ENCODE measurements at regions of chr10 and their contacts with region 1.

Region 1: DNA sequence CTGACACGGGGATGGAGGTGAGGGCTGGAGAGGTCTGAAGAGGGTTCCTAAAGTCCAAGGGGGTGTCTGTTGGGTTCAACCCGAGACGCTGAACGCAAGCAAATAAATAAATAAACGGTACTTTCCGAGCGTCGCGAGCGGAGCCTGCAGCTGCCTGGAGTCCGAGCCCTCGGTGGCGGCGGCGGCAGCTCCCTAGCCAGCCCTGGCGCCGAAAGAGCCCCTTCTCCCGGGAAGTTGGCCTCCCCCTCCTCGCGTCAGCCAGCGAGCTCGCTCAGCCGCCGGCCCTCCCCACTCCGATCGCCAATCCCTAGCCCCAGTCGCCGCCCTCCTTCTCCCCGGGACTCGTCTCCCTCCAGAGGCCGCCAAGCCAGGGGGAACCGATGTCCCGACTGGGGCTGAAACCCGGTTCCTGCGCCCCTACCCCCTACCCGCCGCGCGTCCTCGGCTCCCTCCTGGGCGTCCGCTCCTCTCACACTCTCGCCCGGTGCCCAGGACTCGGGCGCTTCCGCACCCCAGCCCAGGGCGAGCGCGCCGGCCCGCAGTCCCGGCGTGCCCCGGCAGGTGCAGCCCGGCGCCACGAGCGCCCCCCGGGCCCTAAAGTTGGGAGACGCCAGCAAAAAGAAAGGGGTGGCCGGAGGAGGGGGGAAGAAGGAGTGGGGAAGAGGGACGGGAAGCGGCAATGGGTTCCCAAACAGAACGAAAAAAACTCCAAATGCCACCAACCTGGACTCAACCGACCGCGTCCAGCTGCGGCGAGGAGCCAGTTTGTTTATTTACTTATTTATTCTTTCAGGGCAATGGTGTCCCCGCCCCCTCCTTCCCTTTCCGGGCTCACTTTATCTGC is at the start of gene GFRA1:
- DNase-seq: no peak
- H3K4me3 ChIP-seq: peak within 1 kb of the TSS; percentile 39 to 52 (median 44)
- H3K27ac ChIP-seq: peak within 1 kb of the TSS; percentile 55 to 81 (median 57)
- H3K4me1 ChIP-seq: peaks cover 0 to 23% (median 11%) of the 10 kb centered on the region in 4 donors
- H3K27me3 ChIP-seq: peaks cover 85% of the 10 kb centered on the region
- CTCF ChIP-seq: peak in 1 of 5 experiments; percentile 5
- EP300 ChIP-seq: no peak
- POLR2A ChIP-seq: no peak
- total RNA-seq, gene GFRA1: 12.0 to 32.8 (median 17.3) TPM

Region 2: DNA sequence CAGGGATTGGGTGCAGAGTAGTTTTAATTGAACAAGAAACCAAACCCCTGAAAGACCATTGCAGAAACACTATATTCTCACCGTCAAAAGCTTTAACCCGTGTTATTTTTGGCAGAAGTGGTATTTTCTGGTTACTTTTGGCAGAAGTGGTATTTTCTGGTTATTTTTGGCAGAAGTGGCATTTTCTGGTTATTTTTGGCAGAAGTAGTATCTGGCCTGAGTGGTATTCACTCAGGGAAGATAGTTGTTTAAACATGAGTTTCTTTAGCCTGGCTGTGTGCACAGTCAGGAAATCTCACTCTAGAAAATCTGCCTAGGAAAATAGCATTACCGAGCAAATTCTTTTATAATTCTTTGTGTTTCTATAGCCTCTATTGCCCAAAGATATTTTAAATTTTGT is 322.3 kb before region 1 on chr10:
- in situ Hi-C with region 1: no loop called
- intact Hi-C with region 1: loop called (anchors 10 kb)
- DNase-seq: no peak
- H3K4me3 ChIP-seq: no peak overlapping the region
- H3K27ac ChIP-seq: no peak overlapping the region
- H3K4me1 ChIP-seq: no peaks in the 10 kb centered on the region
- H3K27me3 ChIP-seq: no peaks in the 10 kb centered on the region
- CTCF ChIP-seq: no peak
- EP300 ChIP-seq: no peak
- POLR2A ChIP-seq: no peak